ENCODE measurements at regions of chr7 and their contacts with region 1.

Region 1: DNA sequence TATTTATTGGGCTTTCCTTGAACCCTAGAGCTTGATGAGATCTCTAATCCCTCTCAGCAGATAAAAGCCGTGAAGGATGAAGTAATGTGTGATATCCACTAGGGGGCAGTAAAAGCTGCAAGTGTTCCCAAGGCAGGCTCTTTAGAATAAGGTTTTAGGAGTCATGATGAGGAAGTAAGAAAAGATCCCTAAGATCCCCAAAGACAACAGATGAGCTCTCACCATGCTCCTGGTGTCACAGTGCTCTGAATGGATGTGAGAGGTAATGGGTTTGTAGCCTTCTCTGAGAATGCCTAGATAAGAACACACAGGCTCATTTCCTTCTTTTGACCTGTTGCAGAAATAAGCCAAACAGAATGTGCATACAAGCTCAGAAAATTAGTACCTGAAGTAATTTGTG is 70.4 kb upstream of the ITPRID1 start:
- DNase-seq: peak; percentile 47
- H3K4me3 Mint-ChIP-seq: peak overlapping the region; percentile 27
- H3K27ac Mint-ChIP-seq: peak overlapping the region; percentile 7
- H3K4me1 Mint-ChIP-seq: peaks cover 43% of the 10 kb centered on the region
- H3K27me3 Mint-ChIP-seq: no peaks in the 10 kb centered on the region
- CTCF ChIP-seq: peak; percentile 81

Region 2: GRCh38 chr7:31192986-31193385 is 250.5 kb before region 1 on chr7:
- CTCF ChIA-PET with region 1: interaction called, 11 read pairs
- intact Hi-C with region 1: loop called (anchors 2 kb)
- DNase-seq: peak; percentile 84
- H3K4me3 Mint-ChIP-seq: no peak overlapping the region
- H3K27ac Mint-ChIP-seq: no peak overlapping the region
- H3K4me1 Mint-ChIP-seq: no peaks in the 10 kb centered on the region
- H3K27me3 Mint-ChIP-seq: peaks cover 66% of the 10 kb centered on the region
- CTCF ChIP-seq: peak; percentile 93

Region 3: DNA sequence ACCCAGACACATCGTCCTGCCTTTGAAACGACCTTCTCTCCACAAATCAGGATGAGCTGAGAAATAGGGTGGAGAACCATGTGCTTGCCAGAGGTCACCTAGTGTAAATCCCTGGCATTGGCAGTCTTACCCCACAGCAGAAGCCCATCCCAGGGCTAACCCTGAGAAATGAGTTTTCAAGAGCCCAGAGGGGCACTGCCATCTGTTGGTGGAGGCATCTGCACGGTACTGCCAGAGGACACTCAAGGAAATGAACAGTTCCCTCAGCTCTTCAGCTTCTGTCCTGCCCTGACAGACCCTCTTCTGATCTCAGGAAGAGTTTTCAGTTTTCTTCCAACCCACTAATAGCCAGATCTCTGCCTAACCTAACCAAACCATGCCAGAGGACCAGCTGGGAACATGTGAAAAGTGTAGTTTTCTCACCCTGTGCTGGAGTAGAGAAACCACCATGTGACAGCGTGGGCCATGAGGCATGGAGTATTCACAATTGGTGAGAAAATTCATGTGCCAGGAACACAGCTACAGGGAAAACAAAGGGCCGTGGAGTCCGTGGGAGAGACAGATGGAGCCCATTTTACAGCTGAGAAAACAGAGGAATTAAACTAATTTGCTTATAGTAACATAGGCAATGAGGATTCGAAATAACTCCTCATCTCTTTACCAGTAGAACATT is 32.8 kb after region 1 on chr7:
- CTCF ChIA-PET with region 1: interaction called, 15 read pairs
- intact Hi-C with region 1: no loop called
- DNase-seq: peak; percentile 53
- H3K4me3 Mint-ChIP-seq: no peak overlapping the region
- H3K27ac Mint-ChIP-seq: no peak overlapping the region
- H3K4me1 Mint-ChIP-seq: peaks cover 51% of the 10 kb centered on the region
- H3K27me3 Mint-ChIP-seq: no peaks in the 10 kb centered on the region
- CTCF ChIP-seq: peak; percentile 26

Region 4: GRCh38 chr7:31553661-31554081 is 110.2 kb after region 1 on chr7:
- CTCF ChIA-PET with region 1: interaction called, 5 read pairs
- intact Hi-C with region 1: loop called (anchors 1 kb)
- DNase-seq: no peak
- H3K4me3 Mint-ChIP-seq: no peak overlapping the region
- H3K27ac Mint-ChIP-seq: peak overlapping the region; percentile 71
- H3K4me1 Mint-ChIP-seq: peaks cover 22% of the 10 kb centered on the region
- H3K27me3 Mint-ChIP-seq: no peaks in the 10 kb centered on the region
- CTCF ChIP-seq: no peak

Region 5: DNA sequence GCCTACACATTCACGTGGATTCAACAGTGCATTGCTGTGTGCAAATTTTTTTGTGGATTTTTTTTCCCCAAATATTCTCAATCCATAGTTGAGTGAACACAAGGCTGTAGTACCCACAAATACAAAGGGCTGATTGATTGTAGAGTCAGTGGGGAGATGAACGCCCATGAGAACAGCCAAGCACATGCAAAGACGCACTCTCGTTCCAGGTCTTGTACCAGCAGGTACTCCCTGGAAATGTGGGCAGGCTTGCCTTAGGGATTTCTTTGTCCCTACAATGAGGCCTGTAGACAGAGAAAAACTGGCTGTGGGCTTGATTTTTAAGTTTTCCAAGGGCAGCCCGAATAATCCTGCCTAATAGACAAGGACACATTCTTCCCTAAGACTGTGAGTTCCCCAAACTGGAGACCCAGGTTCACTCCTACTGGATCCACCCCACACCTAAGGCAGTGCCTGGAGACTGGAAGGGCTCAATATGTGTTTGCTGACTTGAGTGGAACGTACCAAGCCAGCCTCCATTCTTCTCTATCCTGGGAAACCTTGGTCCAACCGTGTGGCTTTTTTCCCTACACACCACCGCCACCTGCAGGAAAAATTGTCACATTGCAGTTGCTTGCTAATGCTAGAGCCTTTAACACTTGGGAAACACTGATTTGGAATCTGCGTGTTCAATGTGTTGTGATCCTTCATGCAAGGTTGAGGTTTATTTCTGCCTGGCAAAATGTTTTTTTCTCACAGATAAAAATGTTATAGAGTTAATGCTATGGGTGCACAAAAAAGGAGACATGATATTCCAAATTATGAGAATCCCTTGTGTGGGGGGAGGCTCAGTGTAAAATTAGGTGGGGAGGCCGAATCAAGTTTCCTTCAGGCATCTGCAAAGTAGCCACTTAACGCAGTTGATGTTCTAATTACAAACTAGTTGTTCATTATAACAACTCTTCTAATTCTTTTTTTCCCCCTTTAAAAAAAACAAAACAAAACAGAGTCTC is 292.8 kb after region 1 on chr7:
- CTCF ChIA-PET with region 1: no interaction called
- intact Hi-C with region 1: loop called (anchors 2 kb)
- DNase-seq: peak; percentile 86
- H3K4me3 Mint-ChIP-seq: no peak overlapping the region
- H3K27ac Mint-ChIP-seq: no peak overlapping the region
- H3K4me1 Mint-ChIP-seq: no peaks in the 10 kb centered on the region
- H3K27me3 Mint-ChIP-seq: no peaks in the 10 kb centered on the region
- CTCF ChIP-seq: peak; percentile 94